A673 (cell line): ENCODE measurements at regions of chr17 and their contacts with region 1.

Region 1: DNA sequence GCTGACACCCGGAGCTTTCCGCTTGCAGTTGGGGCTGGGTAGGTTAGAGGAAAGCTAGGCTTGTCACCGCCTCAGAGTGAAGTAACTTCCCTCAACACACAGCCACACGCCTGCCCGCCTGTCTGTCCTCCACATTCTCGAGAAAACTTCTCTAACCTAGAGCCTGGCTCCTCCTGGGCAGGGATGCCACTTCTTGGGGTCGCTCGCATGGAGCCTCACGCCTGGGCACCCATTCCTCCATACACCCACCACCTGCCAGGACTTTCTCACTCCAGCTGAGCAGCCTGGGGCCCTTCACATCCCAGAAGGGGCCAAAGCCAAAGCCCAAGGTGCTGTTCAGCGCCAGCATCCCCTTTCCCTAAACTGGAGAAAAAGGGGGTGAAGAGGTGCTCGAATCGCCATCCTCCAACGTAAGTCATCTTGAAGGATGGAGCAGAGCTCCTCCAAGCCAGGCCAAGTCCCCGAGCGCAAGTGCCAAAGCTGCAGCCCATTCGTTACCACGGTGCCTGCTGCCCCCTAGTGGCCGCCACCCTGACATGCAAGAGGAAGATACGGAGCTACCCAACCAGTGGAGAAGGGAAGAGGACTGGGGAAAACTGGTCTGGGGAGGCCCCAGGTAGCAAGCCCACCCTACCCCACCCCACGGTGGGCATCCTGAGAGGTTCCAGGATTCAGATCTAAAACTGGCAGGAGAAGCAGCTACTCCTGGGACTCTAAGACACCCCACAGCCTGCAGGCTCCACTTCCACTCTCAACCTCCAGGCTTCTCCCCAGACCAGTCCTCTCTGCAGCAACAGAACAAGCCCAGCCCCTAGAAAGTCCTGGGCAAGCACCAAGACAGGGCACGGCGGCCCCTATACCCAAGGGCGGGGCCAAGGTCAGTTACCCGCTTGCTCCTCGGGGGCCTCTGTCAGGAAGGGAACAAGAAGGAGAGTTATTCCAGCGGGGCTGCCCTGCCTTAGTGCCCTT is 63.1 kb downstream of the MYO18A start:
- DNase-seq: peak; percentile 86
- H3K4me3 ChIP-seq: no peak overlapping the region
- H3K27ac ChIP-seq: no peak overlapping the region
- H3K4me1 ChIP-seq: peaks cover 28% of the 10 kb centered on the region
- H3K27me3 ChIP-seq: no peaks in the 10 kb centered on the region
- CTCF ChIP-seq: peak; percentile 99

Region 2: GRCh38 chr17:28951991-28952975 is 164.8 kb before region 1 on chr17:
- CTCF ChIA-PET with region 1: interaction called, 23 read pairs
- POLR2A ChIA-PET with region 1: interaction called, 4 read pairs
- intact Hi-C with region 1: no loop called
- DNase-seq: peak; percentile 100
- H3K4me3 ChIP-seq: peak overlapping the region; percentile 88
- H3K27ac ChIP-seq: peak overlapping the region; percentile 95
- H3K4me1 ChIP-seq: peaks cover 23% of the 10 kb centered on the region
- H3K27me3 ChIP-seq: no peaks in the 10 kb centered on the region
- CTCF ChIP-seq: no peak

Region 3: DNA sequence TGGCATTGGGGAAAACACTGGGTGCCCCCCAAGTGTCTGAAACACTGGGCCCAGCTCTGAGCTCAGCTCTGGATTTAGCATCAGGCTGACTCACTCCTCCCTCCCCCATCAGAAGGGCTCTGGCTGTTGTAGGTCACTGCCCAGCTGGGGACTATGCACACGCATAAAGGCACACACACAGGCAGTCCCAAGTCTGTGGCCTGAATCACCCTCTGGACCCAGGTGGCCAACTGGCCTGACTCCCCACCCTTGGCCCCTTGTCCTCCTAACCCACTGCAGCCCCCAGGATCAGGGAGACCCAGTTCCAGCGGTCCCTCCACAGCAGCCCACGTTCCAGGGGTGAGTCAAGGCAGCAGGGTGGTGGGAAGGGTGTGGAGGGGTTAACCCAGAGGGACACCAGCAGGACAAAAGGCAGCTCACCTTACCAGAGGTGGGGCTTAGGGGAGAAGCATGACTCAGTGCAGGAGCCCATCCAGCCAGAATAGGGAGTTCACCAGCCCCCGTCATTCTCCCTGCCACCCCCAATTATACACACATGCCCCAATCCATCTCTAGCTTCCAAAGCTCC is 16.1 kb after region 1 on chr17:
- CTCF ChIA-PET with region 1: interaction called, 12 read pairs
- POLR2A ChIA-PET with region 1: no interaction called
- intact Hi-C with region 1: no loop called
- DNase-seq: no peak
- H3K4me3 ChIP-seq: no peak overlapping the region
- H3K27ac ChIP-seq: no peak overlapping the region
- H3K4me1 ChIP-seq: no peaks in the 10 kb centered on the region
- H3K27me3 ChIP-seq: no peaks in the 10 kb centered on the region
- CTCF ChIP-seq: no peak

Region 4: DNA sequence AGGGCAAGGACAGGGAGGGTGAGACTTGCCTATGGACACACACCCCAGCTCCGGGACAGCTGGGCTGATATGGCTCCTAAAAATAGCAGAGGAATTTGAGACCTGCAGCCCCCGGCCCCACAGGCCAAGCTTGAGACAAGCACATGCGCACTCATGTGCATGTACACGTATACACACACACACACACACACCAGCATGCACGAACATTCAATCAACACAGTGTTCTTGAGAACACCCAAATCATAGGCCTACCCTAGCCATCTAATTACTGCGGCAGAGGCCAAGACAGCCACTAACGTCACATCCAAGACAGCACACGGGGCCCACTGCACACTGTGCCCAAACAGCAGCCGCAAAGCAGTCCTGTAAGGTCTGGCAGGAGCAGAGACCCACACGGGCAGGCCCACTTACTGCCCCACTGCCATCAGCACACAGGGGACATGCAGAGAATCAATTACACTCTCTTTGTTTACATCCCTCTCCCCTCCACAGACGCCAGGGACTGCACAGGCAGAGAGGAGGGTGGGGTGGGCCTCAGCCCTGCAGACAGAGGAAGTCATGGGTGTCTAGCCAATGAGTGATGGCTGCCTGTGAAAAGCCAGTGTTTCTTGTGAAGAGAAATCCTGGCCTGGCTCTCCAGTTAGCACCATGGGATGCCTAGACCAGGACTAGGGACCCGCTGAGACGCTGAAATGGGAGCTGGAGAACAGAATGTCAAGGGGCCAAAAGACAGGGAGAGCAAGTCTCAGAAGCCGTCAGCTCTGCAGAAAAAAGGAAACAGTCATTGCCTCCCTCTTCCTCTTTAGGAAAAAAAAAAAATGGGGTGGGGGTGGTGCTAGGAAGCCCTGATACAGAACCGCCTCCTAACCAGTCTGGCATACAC is 23.8 kb after region 1 on chr17:
- CTCF ChIA-PET with region 1: interaction called, 11 read pairs
- POLR2A ChIA-PET with region 1: no interaction called
- intact Hi-C with region 1: no loop called
- DNase-seq: peak; percentile 39
- H3K4me3 ChIP-seq: no peak overlapping the region
- H3K27ac ChIP-seq: peak overlapping the region; percentile 19
- H3K4me1 ChIP-seq: peaks cover 26% of the 10 kb centered on the region
- H3K27me3 ChIP-seq: no peaks in the 10 kb centered on the region
- CTCF ChIP-seq: no peak